Sigmoid colon (tissue), 7 donors: ENCODE measurements at regions of chr10 and their contacts with region 1.

Region 1: DNA sequence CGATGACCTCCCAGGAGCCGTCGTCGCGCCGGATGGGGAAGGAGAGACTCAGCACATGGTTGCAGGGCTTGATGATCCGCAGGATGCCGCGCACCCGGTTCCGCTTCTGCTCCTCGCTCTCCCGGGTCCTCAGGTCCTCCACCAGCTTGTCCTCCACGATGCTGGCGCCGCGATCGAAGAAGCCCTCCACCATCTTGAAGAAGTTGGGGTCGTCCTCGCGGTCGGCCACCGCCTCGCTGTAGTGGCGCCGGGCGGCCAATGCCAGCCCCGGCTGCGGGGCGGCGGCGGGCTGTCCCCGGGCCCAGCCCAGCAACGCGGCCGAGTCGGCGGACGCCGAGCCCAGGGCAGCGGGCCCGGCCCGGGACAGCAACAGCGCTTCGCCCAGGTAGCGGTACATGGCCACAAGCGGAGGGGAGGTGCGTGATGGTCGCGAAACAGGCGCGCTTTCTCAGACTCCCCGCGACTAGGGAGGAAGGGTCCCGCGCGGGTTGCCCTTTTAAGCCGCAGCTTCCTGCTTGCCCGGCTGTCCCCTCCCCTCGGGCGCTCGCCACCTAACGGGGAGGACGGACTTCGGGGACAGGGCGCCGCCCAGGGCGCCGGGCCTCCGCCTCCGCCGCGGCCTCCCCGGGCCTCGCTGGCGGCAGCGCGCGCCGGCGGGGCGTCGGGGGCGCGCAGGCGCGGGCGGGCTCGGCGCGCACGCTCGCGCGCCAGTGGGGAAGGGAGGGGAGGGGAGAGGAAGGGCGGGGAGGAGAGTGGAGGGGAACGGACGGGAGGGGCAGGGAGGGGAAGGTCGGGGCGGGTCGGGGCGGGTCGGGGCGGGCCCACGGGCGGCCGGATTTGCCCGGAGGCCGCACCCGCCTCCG is at the starts of genes GLUD1 and SHLD2:
- DNase-seq: peak; percentile 95
- H3K4me3 ChIP-seq: peak within 1 kb of the TSS; percentile 67 to 91 (median 78)
- H3K27ac ChIP-seq: peak within 1 kb of the TSS; percentile 94 to 98 (median 96)
- H3K4me1 ChIP-seq: peaks cover 0 to 54% (median 42%) of the 10 kb centered on the region in 4 donors
- H3K27me3 ChIP-seq: no peaks in the 10 kb centered on the region
- CTCF ChIP-seq: no peak
- EP300 ChIP-seq: no peak
- POLR2A ChIP-seq: peak; percentile 52 to 61
- total RNA-seq, gene GLUD1: 135 to 153 (median 148) TPM
- total RNA-seq, gene SHLD2: 19.1 to 26.9 (median 22.8) TPM

Region 2: GRCh38 chr10:86688398-86688921 is 406.1 kb before region 1 on chr10:
- intact Hi-C with region 1: loop called (anchors 10 kb)
- DNase-seq: peak; percentile 85
- H3K4me3 ChIP-seq: no peak overlapping the region
- H3K27ac ChIP-seq: peak overlapping the region; percentile 68 to 95 (median 92)
- H3K4me1 ChIP-seq: peaks cover 0 to 99% (median 81%) of the 10 kb centered on the region in 4 donors
- H3K27me3 ChIP-seq: no peaks in the 10 kb centered on the region
- CTCF ChIP-seq: peak; percentile 60 to 90 (median 76)
- EP300 ChIP-seq: no peak
- POLR2A ChIP-seq: no peak

Region 3: GRCh38 chr10:86971232-86971991 is 123.2 kb before region 1 on chr10:
- intact Hi-C with region 1: loop called (anchors 1 kb)
- DNase-seq: peak; percentile 96
- H3K4me3 ChIP-seq: peak overlapping the region; percentile 62 to 75 (median 70)
- H3K27ac ChIP-seq: peak overlapping the region; percentile 94 to 98 (median 96)
- H3K4me1 ChIP-seq: peaks cover 0 to 51% (median 45%) of the 10 kb centered on the region in 4 donors
- H3K27me3 ChIP-seq: no peaks in the 10 kb centered on the region
- CTCF ChIP-seq: peak in 1 of 4 experiments; percentile 29
- EP300 ChIP-seq: peak in 2 of 4 donors; percentile 81 to 91
- POLR2A ChIP-seq: no peak